ENCODE measurements at regions of chr2 and their contacts with region 1.

Region 1: DNA sequence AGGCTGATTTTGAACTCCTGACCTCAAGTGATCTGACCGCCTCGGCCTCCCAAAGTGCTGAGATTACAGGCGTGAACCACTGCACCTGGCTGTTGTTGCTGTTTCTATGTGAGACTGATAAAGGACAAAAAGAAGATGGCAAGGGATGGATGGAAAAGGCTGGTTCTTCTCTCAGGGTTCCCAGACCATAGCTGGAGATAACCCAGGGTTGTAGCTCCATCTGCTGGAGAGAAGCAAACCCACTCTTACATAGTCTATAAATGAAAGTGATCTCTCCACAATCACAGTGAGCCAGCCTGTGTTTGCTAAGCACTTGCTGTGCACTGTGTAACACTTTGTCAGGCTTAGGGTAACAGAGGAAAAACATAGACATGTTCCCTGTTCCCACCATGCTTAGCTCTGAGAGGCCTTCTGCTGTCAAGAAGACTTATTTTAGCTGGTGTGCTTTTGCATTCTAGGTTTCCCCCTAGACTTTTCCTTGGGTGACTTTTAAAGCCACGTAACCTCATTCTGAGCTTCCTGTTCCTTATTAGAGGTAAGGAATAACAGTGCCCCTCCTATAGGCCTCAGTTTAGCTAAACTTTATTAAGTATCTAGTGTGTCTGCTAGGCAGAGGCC is 49.7 kb downstream of the LIMS1 start:
- DNase-seq: no peak
- ATAC-seq: peak; percentile 82
- H3K4me3 ChIP-seq: no peak overlapping the region
- H3K27ac ChIP-seq: no peak overlapping the region
- H3K4me1 ChIP-seq: peaks cover 43% of the 10 kb centered on the region
- H3K27me3 ChIP-seq: no peaks in the 10 kb centered on the region
- CTCF ChIP-seq: peak; percentile 66 to 89 (median 76)
- EP300 ChIP-seq: no peak
- POLR2A ChIP-seq: no peak
- RAD21 ChIP-seq: peak; percentile 92

Region 2: DNA sequence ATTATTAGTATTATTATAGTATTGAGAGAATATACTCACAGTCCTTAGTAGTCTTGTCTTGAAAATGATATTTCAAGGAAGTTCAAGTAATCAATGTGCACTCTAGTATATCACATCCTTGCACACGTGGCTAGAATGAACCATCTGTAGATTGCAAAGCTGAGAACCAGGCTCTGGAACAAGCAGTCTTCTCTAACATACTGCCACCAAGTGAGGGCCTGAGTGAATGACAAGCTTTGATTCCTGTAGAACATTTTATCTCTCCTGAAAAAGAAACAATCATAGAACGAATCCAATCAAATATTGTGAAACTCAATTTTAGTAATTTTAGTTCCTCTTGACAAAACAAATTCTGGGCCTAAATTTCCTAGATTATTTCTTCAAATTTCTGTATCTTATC is 399.6 kb before region 1 on chr2:
- CTCF ChIA-PET with region 1: interaction called, 10 read pairs
- POLR2A ChIA-PET with region 1: no interaction called
- RAD21 ChIA-PET with region 1: no interaction called
- SMC1A ChIA-PET with region 1: no interaction called
- in situ Hi-C with region 1: no loop called
- intact Hi-C with region 1: no loop called
- DNase-seq: no peak
- ATAC-seq: peak; percentile 71
- H3K4me3 ChIP-seq: no peak overlapping the region
- H3K27ac ChIP-seq: no peak overlapping the region
- H3K4me1 ChIP-seq: no peaks in the 10 kb centered on the region
- H3K27me3 ChIP-seq: no peaks in the 10 kb centered on the region
- CTCF ChIP-seq: peak; percentile 51 to 55 (median 52); a peak in 5 of 6 replicates
- EP300 ChIP-seq: no peak
- POLR2A ChIP-seq: no peak
- RAD21 ChIP-seq: peak; percentile 39

Region 3: DNA sequence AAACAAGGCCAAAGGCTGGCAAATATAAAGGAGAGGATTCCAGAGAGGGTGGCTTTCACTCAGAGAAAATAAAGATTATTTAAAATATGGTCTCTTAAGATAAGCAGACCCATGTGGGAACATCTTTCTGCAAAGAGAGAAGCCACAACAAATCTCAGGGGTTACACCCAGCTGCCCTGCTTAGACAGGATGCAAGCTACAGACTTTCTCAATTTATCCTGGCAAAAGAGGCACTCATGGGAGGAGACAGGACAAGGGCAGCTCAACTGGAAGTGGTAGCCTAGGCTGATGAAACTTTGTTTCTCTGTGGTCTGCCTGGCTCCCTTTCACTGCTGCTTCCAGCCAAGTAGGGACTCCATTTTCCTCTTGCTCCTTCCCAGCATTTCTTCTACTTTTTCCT is 232.1 kb before region 1 on chr2:
- CTCF ChIA-PET with region 1: interaction called, 10 read pairs
- POLR2A ChIA-PET with region 1: no interaction called
- RAD21 ChIA-PET with region 1: interaction called, 8 read pairs
- SMC1A ChIA-PET with region 1: interaction called, 9 read pairs
- in situ Hi-C with region 1: loop called (anchors 5 kb)
- intact Hi-C with region 1: loop called (anchors 1 kb)
- DNase-seq: no peak
- ATAC-seq: no peak
- H3K4me3 ChIP-seq: no peak overlapping the region
- H3K27ac ChIP-seq: no peak overlapping the region
- H3K4me1 ChIP-seq: no peaks in the 10 kb centered on the region
- H3K27me3 ChIP-seq: peaks cover 0 to under 1% of the 10 kb centered on the region in 2 experiments; a peak in 1 of 4 replicates
- CTCF ChIP-seq: no peak
- EP300 ChIP-seq: no peak
- POLR2A ChIP-seq: no peak
- RAD21 ChIP-seq: no peak

Region 4: DNA sequence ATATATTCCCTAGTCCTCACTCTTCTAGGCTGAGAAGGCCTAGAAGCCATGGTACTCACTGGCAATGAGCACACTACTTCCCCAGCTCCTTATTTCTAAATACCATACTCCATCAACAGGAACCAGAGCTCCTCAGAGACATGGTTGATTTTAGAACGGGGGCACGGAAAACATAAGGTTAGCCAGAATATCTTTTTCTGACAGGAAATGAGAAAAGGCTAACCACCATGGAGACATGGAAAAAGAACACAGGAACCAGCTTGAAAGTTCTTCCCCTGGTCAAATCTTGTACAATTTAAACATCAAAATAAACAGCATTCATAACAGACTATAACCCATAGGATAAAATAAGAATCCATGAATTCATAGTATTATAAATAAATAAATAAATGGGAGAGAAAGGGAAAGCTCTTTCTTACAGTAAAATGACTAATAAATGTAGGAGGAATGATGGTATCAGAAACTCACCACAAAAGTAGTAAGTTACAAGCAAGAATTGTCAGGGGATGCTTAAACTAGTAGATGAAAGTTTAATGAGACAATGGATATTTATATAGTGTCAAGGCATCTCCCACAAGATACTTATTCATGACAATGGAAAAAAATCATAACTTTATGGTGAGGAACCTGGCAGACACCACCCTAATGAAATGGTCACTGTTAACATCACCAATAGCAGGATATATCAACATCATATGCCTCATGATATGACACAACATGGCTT is 155.6 kb before region 1 on chr2:
- CTCF ChIA-PET with region 1: no interaction called
- POLR2A ChIA-PET with region 1: no interaction called
- RAD21 ChIA-PET with region 1: no interaction called
- SMC1A ChIA-PET with region 1: no interaction called
- in situ Hi-C with region 1: no loop called
- intact Hi-C with region 1: no loop called
- DNase-seq: no peak
- ATAC-seq: no peak
- H3K4me3 ChIP-seq: no peak overlapping the region
- H3K27ac ChIP-seq: no peak overlapping the region
- H3K4me1 ChIP-seq: no peaks in the 10 kb centered on the region
- H3K27me3 ChIP-seq: no peaks in the 10 kb centered on the region
- CTCF ChIP-seq: no peak
- EP300 ChIP-seq: no peak
- POLR2A ChIP-seq: no peak
- RAD21 ChIP-seq: no peak

Region 5: GRCh38 chr2:108448678-108449493 is 135.1 kb before region 1 on chr2 and contains the start of gene GCC2:
- CTCF ChIA-PET with region 1: interaction called, 3 read pairs
- POLR2A ChIA-PET with region 1: no interaction called
- RAD21 ChIA-PET with region 1: interaction called, 6 read pairs
- SMC1A ChIA-PET with region 1: interaction called, 8 read pairs
- in situ Hi-C with region 1: no loop called
- intact Hi-C with region 1: loop called (anchors 5 kb)
- DNase-seq: peak; percentile 75
- ATAC-seq: peak; percentile 95
- H3K4me3 ChIP-seq: peak within 1 kb of the TSS; percentile 93
- H3K27ac ChIP-seq: peak within 1 kb of the TSS; percentile 86
- H3K4me1 ChIP-seq: peaks cover 7% of the 10 kb centered on the region
- H3K27me3 ChIP-seq: no peaks in the 10 kb centered on the region
- CTCF ChIP-seq: no peak
- EP300 ChIP-seq: peak in 1 of 2 experiments; percentile 38; a peak in 2 of 4 replicates
- POLR2A ChIP-seq: peak; percentile 95
- RAD21 ChIP-seq: no peak
- polyA plus RNA-seq, gene GCC2: 11.8 to 13.5 TPM

Region 6: GRCh38 chr2:108594132-108594981 is 10.3 kb after region 1 on chr2:
- CTCF ChIA-PET with region 1: interaction called, 22 read pairs
- POLR2A ChIA-PET with region 1: interaction called, 3 read pairs
- RAD21 ChIA-PET with region 1: interaction called, 19 read pairs
- SMC1A ChIA-PET with region 1: interaction called, 15 read pairs
- in situ Hi-C with region 1: no loop called
- intact Hi-C with region 1: no loop called
- DNase-seq: no peak
- ATAC-seq: peak; percentile 94
- H3K4me3 ChIP-seq: no peak overlapping the region
- H3K27ac ChIP-seq: no peak overlapping the region; the same call in 1 of the 2 replicates
- H3K4me1 ChIP-seq: peaks cover 34% of the 10 kb centered on the region
- H3K27me3 ChIP-seq: no peaks in the 10 kb centered on the region
- CTCF ChIP-seq: no peak
- EP300 ChIP-seq: peak; percentile 94 to 98
- POLR2A ChIP-seq: no peak
- RAD21 ChIP-seq: no peak

Region 7: DNA sequence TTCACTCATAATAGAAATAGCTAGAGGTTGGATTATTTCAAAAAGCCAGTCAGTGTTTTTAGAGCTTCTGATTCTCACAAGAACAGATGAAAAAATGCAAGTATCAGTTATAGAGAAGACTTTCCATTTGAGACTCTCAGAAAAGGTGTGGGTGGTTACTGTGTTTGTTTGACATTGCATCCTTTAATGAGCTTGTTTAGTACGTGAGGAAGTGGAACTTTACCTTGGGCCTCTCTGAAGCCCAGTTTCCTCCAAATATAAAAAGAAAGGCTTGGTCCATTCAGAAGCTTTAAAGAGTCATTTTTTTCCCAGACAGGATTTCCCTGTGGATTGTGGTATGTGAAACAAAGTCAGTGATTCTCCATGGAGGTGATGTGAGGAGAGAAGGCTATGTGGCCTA is 45.4 kb after region 1 on chr2:
- CTCF ChIA-PET with region 1: interaction called, 118 read pairs
- POLR2A ChIA-PET with region 1: interaction called, 3 read pairs
- RAD21 ChIA-PET with region 1: interaction called, 44 read pairs
- SMC1A ChIA-PET with region 1: interaction called, 89 read pairs
- in situ Hi-C with region 1: no loop called
- intact Hi-C with region 1: no loop called
- DNase-seq: no peak
- ATAC-seq: peak; percentile 74
- H3K4me3 ChIP-seq: peak overlapping the region; percentile 23; the same call in 1 of the 2 replicates
- H3K27ac ChIP-seq: peak overlapping the region; percentile 53; the same call in 1 of the 2 replicates
- H3K4me1 ChIP-seq: peaks cover 41% of the 10 kb centered on the region
- H3K27me3 ChIP-seq: no peaks in the 10 kb centered on the region
- CTCF ChIP-seq: no peak
- EP300 ChIP-seq: peak; percentile 67 to 68; a peak in 3 of 4 replicates
- POLR2A ChIP-seq: no peak
- RAD21 ChIP-seq: 0 out of 2 replicates have a peak, but pooled peaks have one; percentile 1

Region 8: GRCh38 chr2:109009920-109010610 is 426.1 kb after region 1 on chr2:
- CTCF ChIA-PET with region 1: no interaction called
- POLR2A ChIA-PET with region 1: no interaction called
- RAD21 ChIA-PET with region 1: no interaction called
- SMC1A ChIA-PET with region 1: no interaction called
- in situ Hi-C with region 1: no loop called
- intact Hi-C with region 1: no loop called
- DNase-seq: no peak
- ATAC-seq: no peak
- H3K4me3 ChIP-seq: no peak overlapping the region
- H3K27ac ChIP-seq: no peak overlapping the region
- H3K4me1 ChIP-seq: no peaks in the 10 kb centered on the region
- H3K27me3 ChIP-seq: no peaks in the 10 kb centered on the region; a peak in 1 of 4 replicates
- CTCF ChIP-seq: no peak
- EP300 ChIP-seq: no peak
- POLR2A ChIP-seq: no peak
- RAD21 ChIP-seq: no peak